ENCODE measurements at regions of chr5 and their contacts with region 1.

Region 1: GRCh38 chr5:52915176-52915875 is 73.8 kb upstream of the ITGA2 start:
- DNase-seq: no peak
- H3K4me3 ChIP-seq: no peak overlapping the region
- H3K27ac ChIP-seq: peak overlapping the region in 1 of 2 donors; percentile 3
- H3K4me1 ChIP-seq: peaks cover 0 to 12% of the 10 kb centered on the region in 2 donors
- H3K27me3 ChIP-seq: no peaks in the 10 kb centered on the region
- CTCF ChIP-seq: peak; percentile 75 to 84 (median 75)

Region 2: GRCh38 chr5:52665559-52665958 is 249.8 kb before region 1 on chr5:
- intact Hi-C with region 1: loop called (anchors 10 kb)
- DNase-seq: no peak
- H3K4me3 ChIP-seq: no peak overlapping the region
- H3K27ac ChIP-seq: no peak overlapping the region
- H3K4me1 ChIP-seq: no peaks in the 10 kb centered on the region
- H3K27me3 ChIP-seq: no peaks in the 10 kb centered on the region
- CTCF ChIP-seq: no peak

Region 3: GRCh38 chr5:52693280-52693679 is 222.0 kb before region 1 on chr5:
- intact Hi-C with region 1: loop called (anchors 2 kb)
- DNase-seq: no peak
- H3K4me3 ChIP-seq: no peak overlapping the region
- H3K27ac ChIP-seq: no peak overlapping the region
- H3K4me1 ChIP-seq: peaks cover 0 to 29% of the 10 kb centered on the region in 2 donors
- H3K27me3 ChIP-seq: no peaks in the 10 kb centered on the region
- CTCF ChIP-seq: peak; percentile 41 to 67 (median 54)

Region 4: DNA sequence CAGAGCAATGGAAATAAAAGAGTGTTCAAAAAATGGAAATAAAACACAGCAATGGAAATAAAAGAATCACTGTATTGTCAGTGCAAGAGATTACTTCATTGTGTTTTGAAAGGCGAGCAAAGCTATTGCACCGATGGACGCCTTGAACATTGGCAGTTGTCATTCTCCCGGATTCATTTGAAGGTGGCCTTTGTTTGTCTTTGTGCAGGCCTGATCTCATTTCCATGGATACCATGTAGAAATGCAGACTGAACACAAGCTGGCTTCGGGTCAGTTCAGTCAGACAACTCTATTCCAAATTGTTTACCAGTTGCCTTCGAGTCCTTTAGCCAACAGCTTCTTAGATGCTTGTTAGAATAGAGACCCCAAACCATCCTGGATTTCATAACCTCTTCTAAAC is 82.1 kb after region 1 on chr5:
- intact Hi-C with region 1: no loop called
- DNase-seq: no peak
- H3K4me3 ChIP-seq: no peak overlapping the region
- H3K27ac ChIP-seq: no peak overlapping the region
- H3K4me1 ChIP-seq: no peaks in the 10 kb centered on the region
- H3K27me3 ChIP-seq: no peaks in the 10 kb centered on the region
- CTCF ChIP-seq: no peak